ENCODE measurements at regions of chr3 and their contacts with region 1.

Region 1: DNA sequence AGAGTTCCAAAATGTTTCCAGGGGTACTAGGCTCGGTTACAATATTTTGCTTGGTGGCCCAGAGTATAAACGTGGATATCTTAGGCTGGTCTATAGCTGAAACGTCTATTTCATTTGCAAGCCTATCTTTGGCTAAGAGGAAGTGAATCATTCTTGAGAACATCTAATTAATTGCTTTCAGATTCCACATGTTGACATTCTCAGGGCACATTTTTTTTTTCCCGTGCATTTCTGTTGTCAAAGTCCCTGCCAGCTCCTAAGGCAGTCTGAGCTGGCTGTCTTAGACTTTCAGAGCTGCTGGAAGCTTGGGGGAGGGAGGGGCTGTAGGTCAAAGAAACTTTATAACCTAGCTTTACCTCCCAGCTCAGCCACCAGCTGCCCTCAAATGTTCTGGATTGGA is 23.2 kb upstream of the LAMP3 start:
- DNase-seq: no peak
- H3K4me3 ChIP-seq: no peak overlapping the region
- H3K27ac ChIP-seq: no peak overlapping the region
- H3K4me1 ChIP-seq: peaks cover 0 to 12% (median 9%) of the 10 kb centered on the region in 4 donors
- H3K27me3 ChIP-seq: peaks cover 0 to 4% (median 0%) of the 10 kb centered on the region in 4 donors
- CTCF ChIP-seq: no peak
- EP300 ChIP-seq: no peak
- POLR2A ChIP-seq: no peak

Region 2: GRCh38 chr3:183122257-183122932 is 63.3 kb before region 1 on chr3:
- intact Hi-C with region 1: loop called (anchors 2 kb)
- DNase-seq: no peak
- H3K4me3 ChIP-seq: no peak overlapping the region
- H3K27ac ChIP-seq: no peak overlapping the region
- H3K4me1 ChIP-seq: peaks cover 0 to 6% (median 2%) of the 10 kb centered on the region in 4 donors
- H3K27me3 ChIP-seq: peaks cover 0 to 7% (median 0%) of the 10 kb centered on the region in 4 donors
- CTCF ChIP-seq: peak; percentile 82 to 84 (median 83)
- EP300 ChIP-seq: no peak
- POLR2A ChIP-seq: no peak

Region 3: DNA sequence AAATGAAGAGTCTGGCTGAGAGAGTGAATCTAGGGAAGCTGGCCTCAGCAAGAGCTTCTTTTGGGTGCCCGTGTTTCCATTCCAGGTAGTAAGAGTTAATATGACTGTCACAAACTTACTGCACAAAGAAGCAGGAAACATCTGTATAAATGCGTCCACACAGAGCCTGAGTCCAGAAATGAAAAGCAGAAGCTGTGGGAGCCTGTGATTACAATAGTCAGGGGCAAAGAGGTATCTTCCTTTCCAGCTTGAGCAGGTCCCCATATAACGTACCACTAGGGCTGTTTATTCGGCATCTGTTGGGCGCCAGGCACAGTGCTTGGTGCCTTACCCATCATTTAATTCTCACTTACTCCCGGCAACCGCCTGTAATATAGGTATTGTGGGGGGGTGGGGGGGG is 26.9 kb after region 1 on chr3:
- intact Hi-C with region 1: no loop called
- DNase-seq: no peak
- H3K4me3 ChIP-seq: no peak overlapping the region
- H3K27ac ChIP-seq: peak overlapping the region in 1 of 4 donors; percentile 50
- H3K4me1 ChIP-seq: peaks cover 0 to 7% (median 0%) of the 10 kb centered on the region in 4 donors
- H3K27me3 ChIP-seq: no peaks in the 10 kb centered on the region
- CTCF ChIP-seq: no peak
- EP300 ChIP-seq: no peak
- POLR2A ChIP-seq: no peak

Measured in esophagus muscularis mucosa (tissue), 4 donors.